ENCODE measurements at regions of chr17 and their contacts with region 1.

Region 1: GRCh38 chr17:56833809-56834379 is at the starts of genes C17orf67 and DGKE:
- DNase-seq: peak; percentile 96 to 99 (median 99)
- ATAC-seq: peak; percentile 88
- H3K4me3 ChIP-seq: peak within 1 kb of the TSS; percentile 78 to 97
- H3K4me3 Mint-ChIP-seq: peak within 1 kb of the TSS; percentile 96
- H3K27ac ChIP-seq: peak within 1 kb of the TSS; percentile 76 to 79
- H3K27ac Mint-ChIP-seq: peak within 1 kb of the TSS; percentile 93
- H3K4me1 ChIP-seq: peaks cover 55% of the 10 kb centered on the region
- H3K4me1 Mint-ChIP-seq: peaks cover 67% of the 10 kb centered on the region
- H3K27me3 ChIP-seq: no peaks in the 10 kb centered on the region
- H3K27me3 Mint-ChIP-seq: no peaks in the 10 kb centered on the region
- CTCF ChIP-seq: no peak
- total RNA-seq, gene C17orf67: 2.4 to 2.9 TPM
- total RNA-seq, gene DGKE: 24.4 to 25.4 TPM

Region 2: DNA sequence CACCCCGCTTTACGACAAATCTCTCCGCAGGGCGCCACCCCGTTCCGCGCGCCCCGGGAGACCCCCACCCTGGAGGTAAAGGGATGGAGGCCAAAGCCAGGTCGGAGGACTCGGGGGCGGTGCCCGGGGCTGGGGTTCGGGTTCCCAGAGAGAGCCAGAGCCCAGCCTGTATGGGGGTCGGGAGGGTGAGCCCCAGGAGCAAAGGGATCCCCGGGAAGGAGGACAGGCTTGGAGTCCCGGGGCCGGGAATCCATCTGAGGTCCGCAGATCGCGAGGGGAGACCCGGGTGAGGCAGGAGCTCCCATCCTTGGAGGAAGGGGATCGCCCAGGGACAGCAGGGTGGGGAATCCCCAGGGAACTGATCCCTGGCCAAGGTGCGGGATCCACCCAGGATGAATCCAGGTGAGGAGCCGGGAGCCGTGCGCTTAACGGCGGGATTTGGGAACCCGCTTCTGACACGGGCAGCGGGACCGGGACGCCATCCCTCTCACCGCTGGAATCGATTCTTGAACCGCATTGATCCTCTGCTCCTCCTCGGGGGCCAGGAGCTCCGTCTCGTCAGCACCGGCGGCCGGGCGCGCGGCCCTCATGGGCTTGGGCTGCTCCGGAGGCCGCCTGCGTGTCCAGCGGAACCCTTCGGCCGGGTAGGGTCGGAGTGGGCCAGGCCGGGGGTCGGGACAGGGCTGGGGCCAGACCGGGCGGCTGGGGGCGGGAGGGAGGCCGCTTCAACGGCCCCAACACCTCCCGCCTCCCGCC is 1412.5 kb before region 1 on chr17 and contains the start of gene MMD:
- CTCF ChIA-PET with region 1: no interaction called
- POLR2A ChIA-PET with region 1: no interaction called
- intact Hi-C with region 1: loop called (anchors 2 to 10 kb)
- DNase-seq: peak in 3 of 9 experiments; percentile 2 to 67 (median 8)
- ATAC-seq: no peak
- H3K4me3 ChIP-seq: peak within 1 kb of the TSS; percentile 89 to 96
- H3K4me3 Mint-ChIP-seq: peak within 1 kb of the TSS; percentile 89
- H3K27ac ChIP-seq: peak within 1 kb of the TSS; percentile 69 to 70
- H3K27ac Mint-ChIP-seq: peak within 1 kb of the TSS; percentile 96
- H3K4me1 ChIP-seq: peaks cover 25% of the 10 kb centered on the region
- H3K4me1 Mint-ChIP-seq: peaks cover 45% of the 10 kb centered on the region
- H3K27me3 ChIP-seq: peaks cover 0 to 4% of the 10 kb centered on the region in 2 experiments
- H3K27me3 Mint-ChIP-seq: peaks cover 20% of the 10 kb centered on the region
- CTCF ChIP-seq: no peak
- total RNA-seq, gene MMD: 28.2 to 32.8 TPM

Region 3: GRCh38 chr17:56431736-56432135 is 402.2 kb before region 1 on chr17:
- CTCF ChIA-PET with region 1: no interaction called
- POLR2A ChIA-PET with region 1: no interaction called
- intact Hi-C with region 1: no loop called
- DNase-seq: no peak
- ATAC-seq: no peak
- H3K4me3 ChIP-seq: no peak overlapping the region
- H3K4me3 Mint-ChIP-seq: no peak overlapping the region
- H3K27ac ChIP-seq: no peak overlapping the region
- H3K27ac Mint-ChIP-seq: no peak overlapping the region
- H3K4me1 ChIP-seq: no peaks in the 10 kb centered on the region
- H3K4me1 Mint-ChIP-seq: no peaks in the 10 kb centered on the region
- H3K27me3 ChIP-seq: no peaks in the 10 kb centered on the region
- H3K27me3 Mint-ChIP-seq: peaks cover 20% of the 10 kb centered on the region
- CTCF ChIP-seq: no peak

Region 4: GRCh38 chr17:56819431-56820145 is 14.3 kb before region 1 on chr17:
- CTCF ChIA-PET with region 1: interaction called, 24 read pairs
- POLR2A ChIA-PET with region 1: interaction called, 7 read pairs
- intact Hi-C with region 1: loop called (anchors 1 kb)
- DNase-seq: peak; percentile 37 to 83 (median 72)
- ATAC-seq: peak; percentile 94
- H3K4me3 ChIP-seq: no peak overlapping the region
- H3K4me3 Mint-ChIP-seq: no peak overlapping the region
- H3K27ac ChIP-seq: no peak overlapping the region
- H3K27ac Mint-ChIP-seq: no peak overlapping the region
- H3K4me1 ChIP-seq: no peaks in the 10 kb centered on the region
- H3K4me1 Mint-ChIP-seq: peaks cover 4% of the 10 kb centered on the region
- H3K27me3 ChIP-seq: no peaks in the 10 kb centered on the region
- H3K27me3 Mint-ChIP-seq: no peaks in the 10 kb centered on the region
- CTCF ChIP-seq: peak; percentile 82

Region 5: GRCh38 chr17:56863974-56864373 is 30.1 kb after region 1 on chr17:
- CTCF ChIA-PET with region 1: no interaction called
- POLR2A ChIA-PET with region 1: no interaction called
- intact Hi-C with region 1: no loop called
- DNase-seq: no peak
- ATAC-seq: no peak
- H3K4me3 ChIP-seq: no peak overlapping the region
- H3K4me3 Mint-ChIP-seq: no peak overlapping the region
- H3K27ac ChIP-seq: no peak overlapping the region
- H3K27ac Mint-ChIP-seq: peak overlapping the region; percentile 57
- H3K4me1 ChIP-seq: no peaks in the 10 kb centered on the region
- H3K4me1 Mint-ChIP-seq: no peaks in the 10 kb centered on the region
- H3K27me3 ChIP-seq: no peaks in the 10 kb centered on the region
- H3K27me3 Mint-ChIP-seq: no peaks in the 10 kb centered on the region
- CTCF ChIP-seq: no peak

Region 6: DNA sequence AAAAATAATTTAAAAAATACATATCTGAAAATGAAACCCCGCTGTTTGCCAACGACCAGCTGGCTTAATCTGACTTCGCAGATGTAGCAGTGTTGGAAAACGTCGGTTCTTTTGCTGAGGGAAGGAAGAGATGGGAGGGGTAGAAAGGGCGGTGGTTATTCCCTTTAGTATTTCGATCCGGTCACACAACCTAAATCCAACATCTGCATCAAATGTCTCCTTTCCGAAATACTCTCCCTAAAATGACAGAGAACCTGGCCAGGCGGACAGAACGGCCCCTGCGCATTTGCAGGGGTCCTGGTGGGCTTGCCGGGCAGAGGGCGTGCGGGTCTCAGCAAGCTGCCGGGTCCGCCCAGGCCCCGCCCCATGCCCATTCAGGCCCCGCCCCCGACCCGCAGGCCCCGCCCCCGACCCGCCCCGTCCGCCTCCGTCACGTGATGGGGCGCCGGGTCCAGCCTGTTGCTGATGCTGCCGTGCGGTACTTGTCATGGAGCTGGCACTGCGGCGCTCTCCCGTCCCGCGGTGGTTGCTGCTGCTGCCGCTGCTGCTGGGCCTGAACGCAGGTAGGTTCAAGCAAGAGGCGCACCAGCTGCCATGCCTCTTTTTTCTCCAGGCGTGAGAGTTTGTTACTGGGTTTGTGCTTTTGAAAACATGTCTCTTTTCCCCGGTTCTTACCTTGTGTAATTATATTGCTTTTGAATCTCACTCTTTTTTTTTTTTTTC is 143.9 kb after region 1 on chr17 and contains the start of gene SCPEP1:
- CTCF ChIA-PET with region 1: no interaction called
- POLR2A ChIA-PET with region 1: no interaction called
- intact Hi-C with region 1: loop called (anchors 1 kb)
- DNase-seq: peak; percentile 67 to 89 (median 80)
- ATAC-seq: peak; percentile 98
- H3K4me3 ChIP-seq: peak within 1 kb of the TSS; percentile 73 to 79
- H3K4me3 Mint-ChIP-seq: peak within 1 kb of the TSS; percentile 93
- H3K27ac ChIP-seq: peak within 1 kb of the TSS; percentile 33 to 56
- H3K27ac Mint-ChIP-seq: peak within 1 kb of the TSS; percentile 90
- H3K4me1 ChIP-seq: peaks cover 12% of the 10 kb centered on the region
- H3K4me1 Mint-ChIP-seq: peaks cover 19% of the 10 kb centered on the region
- H3K27me3 ChIP-seq: no peaks in the 10 kb centered on the region
- H3K27me3 Mint-ChIP-seq: peaks cover 2% of the 10 kb centered on the region
- CTCF ChIP-seq: no peak
- total RNA-seq, gene SCPEP1: 22.9 to 28.4 TPM

Region 7: DNA sequence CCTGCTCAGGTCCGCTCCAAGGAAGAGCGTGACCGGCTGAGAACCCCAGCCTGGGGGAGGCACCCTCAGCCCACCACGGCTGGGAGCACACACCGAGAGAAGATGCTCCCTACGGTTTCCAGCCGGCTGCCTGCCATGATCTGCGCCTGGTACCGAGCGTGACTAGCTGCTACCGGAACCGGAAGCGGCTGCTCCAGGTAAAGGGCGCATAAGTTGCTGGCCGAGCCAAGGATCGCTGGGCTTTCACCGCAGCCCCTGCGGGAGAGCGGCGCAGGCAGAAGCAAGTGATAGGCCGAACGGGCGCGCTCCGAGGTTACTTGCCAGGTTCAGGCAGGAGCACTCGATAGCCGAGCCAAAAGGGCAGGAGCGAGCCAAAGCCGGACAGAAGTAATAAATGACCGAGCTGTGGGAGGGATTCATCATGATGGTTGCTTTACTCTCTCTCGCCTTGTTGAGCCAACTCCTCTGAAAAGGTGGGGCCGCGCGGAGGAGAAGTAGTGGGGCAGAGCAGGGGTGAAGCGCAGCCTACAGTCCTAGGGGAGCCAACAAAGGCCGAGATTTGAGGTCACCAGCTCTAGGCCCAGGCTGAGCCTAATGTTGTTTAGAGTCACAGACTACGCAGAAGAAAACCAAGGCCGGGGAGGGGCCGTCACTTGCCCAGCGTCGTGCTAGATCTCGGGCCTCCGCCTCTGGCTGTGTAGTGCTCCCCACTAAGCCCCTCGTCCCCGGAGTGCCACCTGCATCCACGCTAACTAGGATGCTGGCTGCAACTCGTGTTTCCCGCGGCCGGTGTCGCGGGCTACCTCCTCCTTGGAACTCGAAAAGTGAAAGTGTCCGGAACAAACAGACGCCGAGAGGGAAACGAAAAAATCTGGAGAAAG is 1016.2 kb after region 1 on chr17 and contains the start of gene MRPS23:
- CTCF ChIA-PET with region 1: no interaction called
- POLR2A ChIA-PET with region 1: no interaction called
- intact Hi-C with region 1: loop called in 1 of 2 experiments (anchors 2 kb)
- DNase-seq: peak; percentile 91 to 99 (median 95)
- ATAC-seq: peak; percentile 94
- H3K4me3 ChIP-seq: peak within 1 kb of the TSS; percentile 74 to 82
- H3K4me3 Mint-ChIP-seq: peak within 1 kb of the TSS; percentile 95
- H3K27ac ChIP-seq: peak within 1 kb of the TSS; percentile 88 to 91
- H3K27ac Mint-ChIP-seq: peak within 1 kb of the TSS; percentile 100
- H3K4me1 ChIP-seq: peaks cover 32% of the 10 kb centered on the region
- H3K4me1 Mint-ChIP-seq: peaks cover 44% of the 10 kb centered on the region
- H3K27me3 ChIP-seq: no peaks in the 10 kb centered on the region
- H3K27me3 Mint-ChIP-seq: no peaks in the 10 kb centered on the region
- CTCF ChIP-seq: no peak
- total RNA-seq, gene MRPS23: 16.2 to 17.2 TPM

Region 8: GRCh38 chr17:58219001-58219788 is 1385.3 kb after region 1 on chr17 and contains the start of gene MKS1:
- CTCF ChIA-PET with region 1: no interaction called
- POLR2A ChIA-PET with region 1: no interaction called
- intact Hi-C with region 1: loop called in 1 of 2 experiments (anchors 5 kb)
- DNase-seq: peak; percentile 92 to 97 (median 95)
- ATAC-seq: peak; percentile 97
- H3K4me3 ChIP-seq: peak within 1 kb of the TSS; percentile 63 to 91
- H3K4me3 Mint-ChIP-seq: peak within 1 kb of the TSS; percentile 87
- H3K27ac ChIP-seq: peak within 1 kb of the TSS; percentile 82 to 90
- H3K27ac Mint-ChIP-seq: peak within 1 kb of the TSS; percentile 93
- H3K4me1 ChIP-seq: peaks cover 14% of the 10 kb centered on the region
- H3K4me1 Mint-ChIP-seq: peaks cover 23% of the 10 kb centered on the region
- H3K27me3 ChIP-seq: no peaks in the 10 kb centered on the region
- H3K27me3 Mint-ChIP-seq: peaks cover 2% of the 10 kb centered on the region
- CTCF ChIP-seq: peak; percentile 67
- total RNA-seq, gene MKS1: 4.6 to 4.9 TPM

Measured in CD8-positive, alpha-beta T cell (primary cell).